Activated CD4-positive, alpha-beta memory T cell treated with anti-CD3 and anti-CD28 coated beads for 36 hours (primary cell): ENCODE measurements at regions of chr10 and their contacts with region 1.

Region 1: DNA sequence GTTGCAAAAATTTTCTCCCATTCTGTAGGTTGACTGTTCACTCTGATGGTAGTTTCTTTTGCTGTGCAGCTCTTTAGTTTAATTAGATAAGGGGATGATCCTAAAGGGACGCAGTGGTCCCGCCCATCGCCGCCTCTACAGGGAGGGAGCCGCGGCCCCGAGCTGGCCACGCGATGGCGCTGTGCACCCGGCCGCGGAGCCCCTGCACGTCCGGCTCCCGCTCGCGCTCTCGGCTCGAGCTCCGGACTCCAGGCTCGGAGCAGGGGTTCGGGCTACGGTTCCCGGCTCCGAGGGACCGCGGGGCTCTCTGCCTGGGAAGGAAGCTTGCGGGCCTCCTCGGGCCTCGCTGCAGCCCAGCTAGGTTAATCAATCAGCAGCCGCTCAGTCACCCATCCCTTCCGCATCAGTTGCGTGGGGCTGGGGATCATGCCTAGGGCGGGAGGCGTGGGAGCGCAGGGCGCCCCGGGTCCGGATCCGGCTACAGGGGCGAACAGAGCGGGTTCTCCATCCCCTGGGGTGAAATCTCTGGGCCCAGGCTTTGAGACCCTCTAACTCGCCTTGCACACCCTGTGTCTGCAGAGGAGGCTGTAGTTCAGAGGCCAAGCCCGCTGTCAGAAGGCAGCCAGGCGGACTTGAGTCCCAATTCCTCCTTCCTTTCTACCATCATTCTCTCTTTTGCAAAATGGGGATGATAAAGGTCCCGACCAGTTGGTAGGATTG is 97.9 kb downstream of the WDR11 start:
- DNase-seq: peak; percentile 74
- H3K4me3 Mint-ChIP-seq: peak overlapping the region; percentile 20
- H3K27ac Mint-ChIP-seq: no peak overlapping the region
- H3K4me1 Mint-ChIP-seq: peaks cover 7% of the 10 kb centered on the region
- H3K27me3 Mint-ChIP-seq: peaks cover 33% of the 10 kb centered on the region

Region 2: DNA sequence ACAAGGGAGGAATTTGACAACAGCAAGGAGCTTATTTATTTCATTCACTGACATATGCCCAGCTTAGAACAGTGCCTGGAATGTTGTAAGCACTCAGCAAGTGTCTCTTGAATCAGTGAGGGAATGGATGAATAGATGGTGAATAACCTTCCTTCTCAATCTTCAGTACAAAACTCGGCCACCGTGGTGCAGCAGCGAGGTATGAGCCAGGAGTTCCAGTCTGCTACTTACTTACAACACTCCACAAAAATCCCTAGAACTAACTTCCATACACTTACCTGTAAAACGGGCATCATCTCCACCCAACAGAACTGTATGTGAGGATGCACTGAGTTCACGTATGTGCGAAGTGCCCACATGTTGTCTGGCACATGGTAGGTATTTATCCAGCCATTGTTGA is 139.5 kb after region 1 on chr10:
- CTCF ChIA-PET with region 1: no interaction called
- POLR2A ChIA-PET with region 1: no interaction called
- intact Hi-C with region 1: no loop called
- DNase-seq: no peak
- H3K4me3 Mint-ChIP-seq: no peak overlapping the region
- H3K27ac Mint-ChIP-seq: no peak overlapping the region
- H3K4me1 Mint-ChIP-seq: no peaks in the 10 kb centered on the region
- H3K27me3 Mint-ChIP-seq: peaks cover 1% of the 10 kb centered on the region

Region 3: DNA sequence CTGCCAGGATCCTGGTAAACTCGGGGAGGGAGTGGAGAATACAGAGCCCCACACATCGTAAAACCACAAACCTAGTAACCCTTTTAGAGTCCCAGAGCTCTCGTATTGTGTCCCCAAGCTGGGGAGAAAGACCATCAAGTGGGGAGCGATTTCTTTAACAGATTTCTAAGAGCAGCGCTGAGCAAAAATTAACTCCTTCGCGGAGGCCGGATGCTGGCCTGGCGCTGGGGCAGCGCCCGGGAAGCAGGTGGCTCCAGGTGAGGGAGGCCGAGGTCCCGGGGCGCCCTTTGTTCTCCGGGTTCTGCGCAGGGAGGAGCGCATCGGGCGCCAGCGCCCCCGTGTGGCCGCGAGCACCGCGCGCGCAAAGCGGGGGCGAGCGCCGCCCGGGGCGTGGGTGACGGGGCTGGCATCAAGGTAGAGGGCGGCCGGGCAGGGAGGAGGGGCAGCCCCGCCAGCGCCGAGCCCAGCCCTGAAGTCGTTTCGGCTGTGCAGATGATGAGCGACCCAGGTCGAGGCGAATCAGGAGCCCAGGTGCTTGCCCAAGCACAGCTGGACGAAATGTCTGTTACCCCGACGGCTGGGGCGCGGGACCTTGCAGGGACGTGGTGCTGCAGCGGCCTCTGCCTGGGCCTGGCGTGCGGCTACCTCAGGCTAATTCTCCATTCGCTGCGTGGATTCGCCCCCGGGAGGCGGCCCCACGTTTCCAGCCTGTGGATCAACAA is 659.6 kb after region 1 on chr10:
- CTCF ChIA-PET with region 1: interaction called, 15 read pairs
- POLR2A ChIA-PET with region 1: no interaction called
- intact Hi-C with region 1: loop called (anchors 1 kb)
- DNase-seq: peak; percentile 49
- H3K4me3 Mint-ChIP-seq: no peak overlapping the region
- H3K27ac Mint-ChIP-seq: no peak overlapping the region
- H3K4me1 Mint-ChIP-seq: no peaks in the 10 kb centered on the region
- H3K27me3 Mint-ChIP-seq: peaks cover 22% of the 10 kb centered on the region

Region 4: DNA sequence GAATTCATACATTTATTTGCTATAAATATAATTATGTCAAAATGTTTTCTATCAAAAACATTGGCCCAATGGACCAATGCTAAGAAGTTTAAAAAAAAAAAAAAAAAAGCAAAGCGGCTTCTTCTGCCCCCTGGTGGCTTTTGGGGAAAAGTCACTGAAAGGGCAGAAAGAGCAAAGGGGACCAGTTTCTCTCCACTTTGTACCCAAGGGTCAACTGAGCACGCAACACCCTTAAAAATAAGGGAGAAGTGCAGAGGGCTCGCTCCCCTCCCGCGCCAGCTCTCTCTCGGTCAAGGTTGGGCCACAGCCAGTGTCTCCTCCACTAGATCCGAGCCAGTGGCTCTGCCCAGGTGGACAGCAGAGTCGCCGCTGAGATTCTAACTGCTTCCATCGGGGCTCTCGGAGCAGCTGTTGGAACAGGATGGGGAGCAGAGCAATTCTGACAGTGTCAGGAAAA is 785.6 kb after region 1 on chr10:
- CTCF ChIA-PET with region 1: interaction called, 11 read pairs
- POLR2A ChIA-PET with region 1: no interaction called
- intact Hi-C with region 1: no loop called
- DNase-seq: no peak
- H3K4me3 Mint-ChIP-seq: no peak overlapping the region
- H3K27ac Mint-ChIP-seq: no peak overlapping the region
- H3K4me1 Mint-ChIP-seq: peaks cover 6% of the 10 kb centered on the region
- H3K27me3 Mint-ChIP-seq: peaks cover 36% of the 10 kb centered on the region